Endothelial cell of umbilical vein (primary cell): ENCODE measurements at regions of chr17 and their contacts with region 1.

Region 1: DNA sequence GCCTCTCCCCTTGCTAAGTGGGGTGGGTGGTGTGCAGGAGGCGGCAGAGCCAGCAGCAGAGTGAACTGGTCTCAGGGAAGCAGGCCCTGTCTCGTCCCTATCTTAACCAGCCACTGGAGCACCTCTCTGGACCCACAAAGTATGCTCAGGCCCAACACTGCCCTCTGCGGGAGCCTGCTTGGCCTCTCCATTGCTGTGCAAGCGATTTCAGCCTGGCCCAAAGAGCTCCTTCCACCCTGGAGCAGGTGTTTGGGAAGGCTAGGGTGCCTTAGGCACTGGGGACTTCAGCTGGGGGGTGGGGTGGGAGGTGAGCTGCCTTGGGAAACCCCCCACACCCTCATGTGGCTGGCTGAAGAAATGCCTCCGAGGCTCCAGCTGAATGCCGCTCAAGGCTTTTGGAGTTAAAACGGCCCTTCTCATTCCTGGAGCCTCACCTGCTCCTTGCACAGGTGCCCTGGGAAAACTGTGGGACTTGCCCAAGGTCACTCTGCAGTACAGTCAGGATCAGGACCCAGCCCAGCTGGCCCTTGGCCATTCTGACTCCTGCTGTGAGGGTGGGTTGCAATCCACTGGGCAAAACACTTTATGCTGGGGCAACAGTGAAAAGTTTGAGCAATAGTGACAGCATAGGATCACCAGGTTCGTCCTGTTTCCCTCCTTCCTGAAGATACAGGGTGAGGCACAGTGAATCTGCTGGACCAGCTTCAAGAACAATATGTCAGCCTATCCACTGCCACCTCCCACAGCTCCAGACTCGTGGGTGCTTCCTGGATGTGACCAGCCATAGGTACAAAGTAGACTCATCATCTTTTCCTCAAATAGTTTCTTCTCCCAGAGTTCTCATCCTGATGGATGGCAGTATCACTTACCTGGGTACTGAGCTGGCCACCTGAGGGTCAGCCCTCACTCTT is 5.9 kb upstream of the UBE2O start:
- DNase-seq: peak; percentile 54
- H3K4me3 ChIP-seq: no peak overlapping the region
- H3K27ac ChIP-seq: no peak overlapping the region
- H3K4me1 ChIP-seq: no peaks in the 10 kb centered on the region
- H3K27me3 ChIP-seq: no peaks in the 10 kb centered on the region
- CTCF ChIP-seq: peak; percentile 39 to 82
- POLR2A ChIP-seq: no peak

Region 2: DNA sequence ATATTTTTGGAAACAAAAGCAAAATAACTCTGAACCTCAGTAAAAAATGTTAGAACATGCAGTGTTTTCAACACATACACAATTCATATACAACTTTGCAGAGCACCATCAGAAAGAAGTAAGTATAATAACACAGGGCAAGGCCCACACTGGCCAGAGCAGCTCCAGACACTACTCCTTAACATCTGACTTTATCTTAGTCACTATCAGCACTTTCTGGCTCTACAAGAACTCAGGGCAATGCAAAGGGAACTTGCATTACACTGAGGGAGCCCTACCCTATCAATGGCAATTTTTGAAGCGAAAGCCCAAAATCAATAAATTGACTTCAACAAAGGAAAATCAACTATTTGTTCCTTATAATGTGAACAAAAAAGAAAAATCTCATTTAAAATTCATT is 235.0 kb before region 1 on chr17:
- CTCF ChIA-PET with region 1: no interaction called
- POLR2A ChIA-PET with region 1: no interaction called
- dilution Hi-C with region 1: no loop called
- intact Hi-C with region 1: no loop called
- DNase-seq: no peak
- H3K4me3 ChIP-seq: no peak overlapping the region
- H3K27ac ChIP-seq: no peak overlapping the region
- H3K4me1 ChIP-seq: no peaks in the 10 kb centered on the region
- H3K27me3 ChIP-seq: peaks cover 3 to 5% of the 10 kb centered on the region in 2 experiments
- CTCF ChIP-seq: no peak
- POLR2A ChIP-seq: no peak

Region 3: DNA sequence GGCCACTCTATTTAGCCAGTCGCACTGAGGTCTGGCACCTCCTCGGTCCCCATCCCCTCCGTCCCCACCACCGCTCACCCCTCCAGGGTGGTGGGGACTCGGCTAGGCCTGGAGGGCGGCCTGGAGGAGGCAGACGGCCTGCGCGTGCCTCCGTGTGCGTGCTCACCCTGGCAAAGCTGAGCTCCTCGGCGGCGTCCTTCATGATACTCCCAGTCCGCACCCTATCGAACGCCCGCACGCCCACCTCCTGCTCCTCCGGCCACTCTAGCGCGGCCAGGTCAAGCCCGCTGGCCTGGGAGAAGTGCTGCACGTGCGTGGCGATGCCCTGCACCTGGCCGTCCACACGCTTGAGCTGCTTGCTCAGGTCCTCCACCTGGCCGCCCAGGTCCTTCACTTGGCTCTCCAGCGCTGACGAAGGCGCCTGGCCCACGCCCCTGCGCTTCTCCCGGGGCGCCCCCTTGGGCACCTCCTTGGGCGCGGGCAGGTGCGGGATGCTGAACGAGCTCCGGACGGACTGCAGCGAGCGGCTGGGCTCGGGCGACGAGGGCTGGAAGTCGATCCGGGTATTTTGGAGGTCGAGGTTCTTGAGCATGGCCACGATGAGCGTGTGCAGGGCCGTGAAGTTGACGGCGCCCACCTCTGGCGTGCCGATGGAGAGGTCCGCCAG is 151.4 kb before region 1 on chr17:
- CTCF ChIA-PET with region 1: interaction called, 13 read pairs
- POLR2A ChIA-PET with region 1: no interaction called
- dilution Hi-C with region 1: no loop called
- intact Hi-C with region 1: no loop called
- DNase-seq: no peak
- H3K4me3 ChIP-seq: no peak overlapping the region
- H3K27ac ChIP-seq: no peak overlapping the region
- H3K4me1 ChIP-seq: no peaks in the 10 kb centered on the region
- H3K27me3 ChIP-seq: no peaks in the 10 kb centered on the region
- CTCF ChIP-seq: no peak
- POLR2A ChIP-seq: no peak

Region 4: DNA sequence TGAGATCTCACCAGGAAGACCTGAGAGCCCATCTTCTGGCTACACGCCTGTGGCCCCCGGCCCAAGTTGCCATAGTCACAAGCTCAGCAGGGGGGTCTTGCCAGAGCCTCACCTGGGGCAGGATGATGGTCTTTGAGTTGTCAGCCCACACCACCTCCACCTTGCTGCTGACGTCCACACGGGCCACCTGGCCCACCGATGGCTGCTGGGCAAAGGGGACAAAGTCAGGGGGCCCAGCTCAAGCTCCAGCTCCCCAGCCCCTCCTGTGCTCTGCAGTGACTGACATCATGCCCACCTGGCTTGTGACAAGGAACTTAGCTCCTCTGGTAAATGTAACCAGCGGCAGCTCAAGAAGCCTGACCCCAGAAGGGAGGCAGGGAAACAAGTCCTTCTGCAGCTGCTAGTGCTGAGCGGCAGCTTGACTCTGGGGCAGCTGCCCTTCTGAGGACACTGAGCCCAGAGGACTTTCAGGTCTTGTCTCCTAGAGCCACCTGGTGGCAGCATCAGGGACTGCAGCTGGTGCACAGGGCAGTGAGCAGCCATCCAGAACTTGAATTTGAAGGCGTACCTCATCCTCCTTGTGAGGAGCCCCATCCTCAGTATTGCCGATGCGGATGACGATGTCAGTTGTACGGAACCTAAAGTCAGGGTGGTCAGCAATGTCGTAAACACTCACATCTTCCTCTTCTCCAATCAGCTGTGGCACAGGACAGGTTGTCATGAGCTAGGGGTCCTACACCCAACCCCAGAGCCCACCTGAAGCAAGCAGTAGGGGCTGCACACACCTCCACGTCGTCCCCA is 60.9 kb before region 1 on chr17:
- CTCF ChIA-PET with region 1: interaction called, 39 read pairs
- POLR2A ChIA-PET with region 1: no interaction called
- dilution Hi-C with region 1: no loop called
- intact Hi-C with region 1: no loop called
- DNase-seq: peak; percentile 81
- H3K4me3 ChIP-seq: no peak overlapping the region
- H3K27ac ChIP-seq: no peak overlapping the region
- H3K4me1 ChIP-seq: no peaks in the 10 kb centered on the region
- H3K27me3 ChIP-seq: no peaks in the 10 kb centered on the region
- CTCF ChIP-seq: peak; percentile 92 to 93
- POLR2A ChIP-seq: no peak

Region 5: GRCh38 chr17:76417499-76418143 is 41.2 kb before region 1 on chr17:
- CTCF ChIA-PET with region 1: interaction called, 319 read pairs
- POLR2A ChIA-PET with region 1: no interaction called
- dilution Hi-C with region 1: no loop called
- intact Hi-C with region 1: no loop called
- DNase-seq: no peak
- H3K4me3 ChIP-seq: no peak overlapping the region
- H3K27ac ChIP-seq: no peak overlapping the region
- H3K4me1 ChIP-seq: no peaks in the 10 kb centered on the region
- H3K27me3 ChIP-seq: no peaks in the 10 kb centered on the region
- CTCF ChIP-seq: no peak
- POLR2A ChIP-seq: no peak

Region 6: DNA sequence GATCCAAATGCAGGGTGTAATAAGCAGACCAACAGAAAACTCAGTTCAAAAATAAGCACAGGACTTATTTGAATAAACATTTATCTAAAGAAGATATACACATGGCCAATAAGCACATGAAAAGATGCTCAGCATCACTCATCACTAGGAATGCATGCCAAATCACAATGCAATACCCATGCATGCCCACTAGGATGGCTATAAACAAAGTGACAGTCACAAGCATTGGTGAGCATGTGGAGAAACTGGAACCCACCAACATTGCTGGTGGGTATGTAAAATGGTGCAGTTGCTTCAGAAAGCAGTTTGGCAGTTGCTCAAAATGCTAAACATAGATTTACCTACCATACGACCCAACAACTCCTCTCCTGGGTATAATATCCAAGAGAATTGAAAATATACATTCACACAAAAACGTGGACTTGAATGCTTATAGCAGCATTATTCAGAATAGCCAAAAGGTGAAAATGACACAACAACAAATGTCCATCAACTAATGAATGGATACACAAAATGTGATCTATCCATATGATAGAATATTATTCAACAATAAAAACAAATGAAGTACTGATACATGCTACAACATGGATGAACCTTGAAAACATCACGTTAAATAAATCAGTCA is 26.0 kb before region 1 on chr17:
- CTCF ChIA-PET with region 1: interaction called, 25 read pairs
- POLR2A ChIA-PET with region 1: no interaction called
- dilution Hi-C with region 1: no loop called
- intact Hi-C with region 1: no loop called
- DNase-seq: no peak
- H3K4me3 ChIP-seq: no peak overlapping the region
- H3K27ac ChIP-seq: no peak overlapping the region
- H3K4me1 ChIP-seq: peaks cover 9% of the 10 kb centered on the region
- H3K27me3 ChIP-seq: no peaks in the 10 kb centered on the region
- CTCF ChIP-seq: peak; percentile 22 to 54
- POLR2A ChIP-seq: no peak

Region 7: DNA sequence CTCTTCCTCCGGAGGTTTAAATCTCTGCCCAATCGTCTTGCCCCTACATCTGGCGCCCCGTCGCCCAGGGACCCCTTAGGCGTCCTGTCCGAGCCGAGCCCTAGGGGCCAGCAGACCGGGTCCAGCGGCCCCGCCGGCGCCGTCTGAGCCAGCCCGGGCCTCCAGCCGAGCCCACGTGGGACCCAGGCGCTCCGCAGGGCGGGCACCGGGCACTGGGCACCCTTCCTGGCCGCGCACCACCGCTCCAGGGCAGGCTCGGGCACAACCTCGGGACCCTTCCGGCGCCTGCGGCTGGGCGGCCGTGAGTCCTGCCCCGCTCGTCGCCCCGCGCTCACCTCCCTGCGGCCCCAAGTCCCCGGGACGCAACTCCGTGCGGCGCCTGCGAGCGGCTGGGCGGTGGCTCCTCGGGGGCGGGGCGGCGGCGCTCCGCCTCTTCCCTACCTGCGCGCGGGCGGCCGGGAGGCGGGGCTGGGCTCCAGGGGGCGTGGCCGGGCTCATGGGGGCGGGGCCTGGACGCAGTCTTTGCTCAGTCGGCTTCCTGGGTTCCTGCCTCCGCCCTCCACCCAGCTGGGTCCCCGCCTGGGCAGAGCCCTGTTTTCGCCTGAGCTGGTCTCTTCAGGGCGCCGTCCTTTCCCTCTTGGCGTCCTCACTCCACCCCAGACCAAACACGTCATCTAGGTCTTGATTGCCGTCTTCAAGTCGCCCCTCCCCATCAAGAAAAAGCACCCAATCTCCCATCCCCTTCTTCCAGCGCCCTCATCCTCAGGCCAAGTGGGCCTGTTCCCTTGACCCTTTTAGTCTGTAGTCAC is 42.4 kb after region 1 on chr17 and contains the start of gene RHBDF2:
- CTCF ChIA-PET with region 1: interaction called, 93 read pairs
- POLR2A ChIA-PET with region 1: interaction called, 6 read pairs
- dilution Hi-C with region 1: no loop called
- intact Hi-C with region 1: loop called (anchors 1 kb)
- DNase-seq: peak; percentile 76
- H3K4me3 ChIP-seq: peak within 1 kb of the TSS; percentile 38 to 72 (median 56)
- H3K27ac ChIP-seq: peak within 1 kb of the TSS; percentile 58
- H3K4me1 ChIP-seq: peaks cover 36% of the 10 kb centered on the region
- H3K27me3 ChIP-seq: no peaks in the 10 kb centered on the region
- CTCF ChIP-seq: no peak
- POLR2A ChIP-seq: peak; percentile 83
- total RNA-seq, gene RHBDF2: 38.5 and 42.6 TPM in 2 replicates

Region 8: GRCh38 chr17:76515274-76515949 is 56.6 kb after region 1 on chr17:
- CTCF ChIA-PET with region 1: interaction called, 11 read pairs
- POLR2A ChIA-PET with region 1: no interaction called
- dilution Hi-C with region 1: no loop called
- intact Hi-C with region 1: no loop called
- DNase-seq: no peak
- H3K4me3 ChIP-seq: no peak overlapping the region
- H3K27ac ChIP-seq: no peak overlapping the region
- H3K4me1 ChIP-seq: no peaks in the 10 kb centered on the region
- H3K27me3 ChIP-seq: no peaks in the 10 kb centered on the region
- CTCF ChIP-seq: no peak
- POLR2A ChIP-seq: no peak

Region 9: GRCh38 chr17:76585818-76586593 is 127.2 kb after region 1 on chr17 and contains the start of gene ST6GALNAC2:
- CTCF ChIA-PET with region 1: no interaction called
- POLR2A ChIA-PET with region 1: no interaction called
- dilution Hi-C with region 1: no loop called
- intact Hi-C with region 1: no loop called
- DNase-seq: peak; percentile 50
- H3K4me3 ChIP-seq: peak within 1 kb of the TSS; percentile 17 to 37 (median 35)
- H3K27ac ChIP-seq: no peak within 1 kb of the TSS
- H3K4me1 ChIP-seq: peaks cover 5% of the 10 kb centered on the region
- H3K27me3 ChIP-seq: peaks cover 16 to 18% of the 10 kb centered on the region in 2 experiments
- CTCF ChIP-seq: peak; percentile 21 to 55
- POLR2A ChIP-seq: no peak
- total RNA-seq, gene ST6GALNAC2: 0.69 and 1.7 TPM in 2 replicates

Region 10: GRCh38 chr17:76630151-76630550 is 171.3 kb after region 1 on chr17:
- CTCF ChIA-PET with region 1: no interaction called
- POLR2A ChIA-PET with region 1: no interaction called
- dilution Hi-C with region 1: no loop called
- intact Hi-C with region 1: no loop called
- DNase-seq: no peak
- H3K4me3 ChIP-seq: no peak overlapping the region
- H3K27ac ChIP-seq: no peak overlapping the region
- H3K4me1 ChIP-seq: no peaks in the 10 kb centered on the region
- H3K27me3 ChIP-seq: peaks cover 0 to 2% of the 10 kb centered on the region in 2 experiments
- CTCF ChIP-seq: no peak
- POLR2A ChIP-seq: no peak